ENCODE measurements at regions of chr19 and their contacts with region 1.

Region 1: DNA sequence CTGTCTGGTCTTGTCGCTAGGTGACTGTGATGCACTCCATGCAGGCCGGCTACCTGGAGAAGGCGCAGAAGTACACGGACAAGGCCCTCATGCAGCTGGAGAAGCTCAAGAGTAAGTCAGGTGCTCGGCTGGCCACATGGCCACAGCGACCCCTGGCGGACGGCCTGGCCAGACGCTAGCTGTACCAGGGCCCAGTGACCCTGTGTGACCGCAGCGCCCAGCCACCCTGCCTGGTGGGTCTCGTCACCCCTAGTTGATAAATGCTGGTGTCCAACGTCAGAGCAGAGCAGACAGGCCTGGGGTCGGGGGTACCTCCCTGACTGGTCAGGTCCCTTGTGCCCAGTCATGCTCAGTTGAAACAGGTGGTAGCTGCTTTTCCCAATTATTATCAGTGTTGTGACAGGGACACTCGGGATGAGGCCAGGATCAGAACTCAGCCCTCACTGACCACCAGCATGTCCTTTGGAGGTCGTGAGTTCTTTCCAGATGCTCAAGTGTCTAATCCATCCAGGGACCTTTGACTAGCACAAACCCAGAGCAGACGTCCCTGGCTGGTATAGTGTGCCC is 22.2 kb downstream of the MAU2 start:
- DNase-seq: peak; percentile 56 to 85 (median 83)
- ATAC-seq: peak; percentile 66 to 71
- H3K4me3 ChIP-seq: no peak overlapping the region
- H3K27ac ChIP-seq: no peak overlapping the region
- H3K4me1 ChIP-seq: no peaks in the 10 kb centered on the region
- H3K27me3 ChIP-seq: no peaks in the 10 kb centered on the region

Region 2: DNA sequence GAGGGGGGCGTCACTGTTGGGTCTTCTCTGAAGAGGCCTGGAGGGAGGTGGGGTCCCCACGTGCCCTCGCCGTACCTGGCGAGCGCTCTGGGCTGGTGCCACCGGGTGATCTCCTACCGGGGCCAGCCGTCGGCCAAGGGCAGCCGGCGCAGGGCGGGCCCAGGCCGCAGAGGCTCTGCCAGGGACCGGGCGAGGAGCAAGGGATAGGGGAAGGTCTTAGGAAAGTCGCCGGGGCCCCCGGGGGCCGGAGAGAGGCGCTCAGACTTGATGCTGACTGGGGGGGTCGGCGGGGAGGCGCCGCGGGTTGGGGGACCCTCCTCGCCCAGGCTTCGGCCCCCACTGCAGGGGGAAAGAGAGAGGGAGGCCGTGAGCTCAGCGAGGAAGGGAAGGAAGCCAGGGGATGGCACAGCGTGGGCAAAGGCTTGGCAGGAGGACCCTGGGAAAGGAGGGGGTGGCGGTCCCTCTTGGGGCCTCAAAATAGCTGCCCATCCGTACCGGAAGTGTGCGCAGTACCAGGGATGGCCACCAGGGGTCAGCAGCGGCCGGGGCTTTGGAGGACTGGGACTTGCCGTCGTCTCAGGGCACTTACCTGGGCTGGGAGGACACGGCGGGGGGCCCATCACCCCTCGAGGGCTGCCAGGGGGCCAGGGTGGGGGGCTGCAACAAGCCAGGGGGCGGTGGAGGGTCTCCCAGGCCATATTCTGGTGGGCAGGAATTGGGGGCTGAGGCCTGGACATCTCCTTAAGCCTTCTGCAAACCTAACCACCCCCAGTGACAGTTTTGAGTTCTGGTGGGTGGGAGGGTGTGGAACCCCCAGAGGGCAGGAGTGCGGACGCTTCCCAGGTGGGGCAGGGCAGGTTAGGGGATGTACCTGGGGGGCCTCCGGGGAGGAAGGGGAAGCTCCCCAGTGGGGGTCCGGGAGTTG is 196.9 kb before region 1 on chr19:
- intact Hi-C with region 1: loop called in 1 of 4 experiments (anchors 10 kb)
- DNase-seq: peak; percentile 78 to 92 (median 91)
- ATAC-seq: peak; percentile 69 to 81
- H3K4me3 ChIP-seq: no peak overlapping the region
- H3K27ac ChIP-seq: no peak overlapping the region
- H3K4me1 ChIP-seq: no peaks in the 10 kb centered on the region
- H3K27me3 ChIP-seq: no peaks in the 10 kb centered on the region

Region 3: DNA sequence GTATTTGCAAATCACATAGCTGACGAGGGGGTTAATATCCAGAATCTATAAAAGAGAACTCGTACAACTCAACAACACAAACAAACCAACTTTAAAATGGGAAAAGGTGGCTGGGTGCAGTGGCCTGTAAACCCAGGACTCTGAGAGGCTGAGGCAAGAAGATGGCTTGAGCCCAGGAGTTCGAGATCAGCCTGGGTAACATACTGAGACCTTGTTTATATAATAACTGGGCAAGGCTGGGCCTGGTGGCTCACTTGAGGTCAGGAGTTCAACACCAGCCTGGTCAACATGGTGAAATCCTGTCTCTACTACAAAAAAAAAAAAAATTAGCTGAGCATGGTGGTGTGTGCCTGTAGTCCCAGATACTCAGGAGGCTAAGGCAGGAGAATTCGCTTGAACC is 47.9 kb before region 1 on chr19:
- intact Hi-C with region 1: no loop called
- DNase-seq: no peak
- ATAC-seq: no peak
- H3K4me3 ChIP-seq: no peak overlapping the region
- H3K27ac ChIP-seq: no peak overlapping the region
- H3K4me1 ChIP-seq: no peaks in the 10 kb centered on the region
- H3K27me3 ChIP-seq: no peaks in the 10 kb centered on the region